ENCODE measurements at regions of chr18 and their contacts with region 1.

Region 1: GRCh38 chr18:3297025-3297984 is 35.4 kb downstream of the MYL12B start:
- DNase-seq: peak; percentile 97
- H3K4me3 Mint-ChIP-seq: peak overlapping the region; percentile 95
- H3K27ac Mint-ChIP-seq: peak overlapping the region; percentile 47
- H3K4me1 Mint-ChIP-seq: peaks cover 5% of the 10 kb centered on the region
- H3K27me3 Mint-ChIP-seq: no peaks in the 10 kb centered on the region
- CTCF ChIP-seq: peak; percentile 36

Region 2: DNA sequence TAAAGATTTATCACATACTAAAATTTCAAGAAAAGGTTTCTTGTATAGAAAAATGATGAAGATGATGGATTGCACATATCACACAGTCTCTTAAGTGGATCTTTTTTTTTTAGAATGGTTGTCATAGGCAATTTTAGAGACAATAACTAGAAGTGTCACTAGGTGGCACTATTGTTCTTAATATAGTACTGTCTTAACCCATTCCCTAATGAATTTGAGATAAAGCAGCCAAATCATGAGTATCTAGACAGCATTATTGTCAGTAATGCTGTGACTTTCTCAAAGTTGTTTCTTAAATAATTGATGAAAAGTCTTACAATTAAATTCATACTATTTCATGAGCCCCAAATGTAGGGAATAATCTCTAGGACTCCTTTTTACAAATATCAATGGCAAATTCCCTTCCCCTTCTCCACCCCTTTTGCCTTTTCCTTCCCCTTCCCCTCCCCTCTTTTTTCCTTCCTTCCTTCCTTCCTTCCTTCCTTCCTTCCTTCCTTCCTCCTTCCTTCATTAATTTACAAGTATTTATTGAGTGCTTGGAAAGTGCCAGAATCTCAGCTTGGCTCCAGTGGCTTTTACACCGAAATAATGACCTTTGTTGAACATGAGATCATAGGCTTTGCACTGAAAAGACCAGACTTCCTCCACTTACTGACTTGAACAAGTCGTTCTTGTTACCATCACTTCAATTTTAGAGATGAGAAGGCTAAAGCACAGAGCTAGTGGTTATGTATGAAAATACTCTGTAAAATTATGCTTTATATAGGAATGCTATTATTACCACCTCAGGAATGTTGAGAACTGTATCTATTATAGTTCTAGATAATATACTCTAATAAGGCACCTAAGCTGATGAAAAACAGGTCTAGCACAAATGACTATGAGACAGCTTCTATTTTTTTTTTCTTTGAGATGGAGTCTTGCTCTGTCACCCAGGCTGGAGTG is 15.6 kb before region 1 on chr18:
- CTCF ChIA-PET with region 1: interaction called, 16 read pairs
- POLR2A ChIA-PET with region 1: interaction called, 15 read pairs
- intact Hi-C with region 1: no loop called
- DNase-seq: peak; percentile 80
- H3K4me3 Mint-ChIP-seq: no peak overlapping the region
- H3K27ac Mint-ChIP-seq: no peak overlapping the region
- H3K4me1 Mint-ChIP-seq: peaks cover 6% of the 10 kb centered on the region
- H3K27me3 Mint-ChIP-seq: no peaks in the 10 kb centered on the region
- CTCF ChIP-seq: peak; percentile 52

Region 3: DNA sequence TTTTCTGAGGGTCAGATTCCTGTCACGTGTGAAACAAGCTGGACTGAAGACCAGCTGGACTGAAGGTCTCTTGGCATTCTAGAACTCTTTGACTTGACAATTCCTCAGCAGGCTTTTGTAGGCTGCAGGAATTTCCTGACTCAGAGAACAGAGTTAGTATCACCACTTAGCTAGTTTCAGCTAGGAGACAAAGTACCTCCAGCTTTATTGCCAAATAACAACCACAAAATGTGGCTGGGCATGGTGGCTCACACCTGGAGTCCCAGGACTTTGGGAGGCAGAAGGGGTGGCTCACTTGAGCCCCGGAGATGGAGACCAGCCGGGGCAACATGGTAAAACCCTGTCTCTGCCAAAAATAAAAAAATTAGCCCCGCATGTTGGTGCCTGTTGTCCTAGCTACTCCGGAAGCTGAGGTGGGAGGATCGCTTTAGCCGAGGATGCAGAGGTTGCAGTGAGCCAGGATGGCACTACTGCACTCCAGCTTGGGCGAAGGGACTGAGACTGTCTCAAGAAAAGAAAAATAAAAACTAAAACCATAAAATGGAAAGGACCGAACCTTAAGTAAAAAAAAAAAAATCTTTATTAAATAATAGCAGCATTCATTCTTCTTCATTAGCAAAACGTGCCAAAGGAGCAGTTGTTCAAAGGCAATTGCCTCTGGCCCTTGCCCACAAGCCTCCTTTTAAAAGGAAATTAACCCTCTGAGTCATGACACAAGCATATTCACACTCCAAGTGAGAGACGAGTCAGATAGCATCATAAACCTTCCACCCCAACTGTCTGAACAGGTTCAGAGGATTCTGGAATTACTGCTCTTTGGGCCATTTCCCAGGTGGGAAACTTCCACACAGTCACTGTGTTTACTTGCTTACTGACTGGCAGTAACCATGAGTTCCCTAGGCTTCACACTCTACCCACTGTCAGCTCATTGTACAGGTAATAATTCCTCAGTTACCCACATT is 53.5 kb after region 1 on chr18:
- CTCF ChIA-PET with region 1: interaction called, 3 read pairs
- POLR2A ChIA-PET with region 1: interaction called, 23 read pairs
- intact Hi-C with region 1: loop called (anchors 5 kb)
- DNase-seq: peak; percentile 73
- H3K4me3 Mint-ChIP-seq: no peak overlapping the region
- H3K27ac Mint-ChIP-seq: no peak overlapping the region
- H3K4me1 Mint-ChIP-seq: peaks cover 14% of the 10 kb centered on the region
- H3K27me3 Mint-ChIP-seq: no peaks in the 10 kb centered on the region
- CTCF ChIP-seq: no peak

Region 4: DNA sequence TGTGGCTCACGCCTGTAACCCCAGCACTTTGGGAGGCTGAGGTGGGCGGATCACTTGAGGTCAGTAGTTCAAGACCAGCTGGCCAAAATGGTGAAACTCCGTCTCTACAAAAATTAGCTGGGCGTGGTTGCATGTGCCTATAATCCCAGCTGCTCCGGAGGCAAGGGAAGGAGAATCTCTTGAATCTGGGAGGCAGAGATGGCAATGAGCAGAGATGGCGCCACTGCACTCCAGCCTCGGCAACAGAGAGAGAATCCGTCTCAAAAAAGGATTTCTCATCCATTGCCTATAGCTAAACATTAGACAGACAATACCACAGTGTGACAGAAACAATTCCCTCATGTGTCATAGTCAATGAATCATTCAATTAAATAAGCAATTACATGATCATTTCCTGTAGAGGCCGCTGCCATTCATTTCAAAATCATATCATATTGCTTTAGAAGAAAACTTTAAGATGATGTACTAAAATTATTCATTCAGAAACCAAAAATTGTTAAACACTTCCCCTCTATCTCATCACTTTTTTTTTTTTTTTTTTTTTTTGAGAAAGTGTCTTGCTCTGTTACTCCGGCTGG is 83.2 kb after region 1 on chr18:
- CTCF ChIA-PET with region 1: no interaction called
- POLR2A ChIA-PET with region 1: no interaction called
- intact Hi-C with region 1: no loop called
- DNase-seq: peak; percentile 74
- H3K4me3 Mint-ChIP-seq: no peak overlapping the region
- H3K27ac Mint-ChIP-seq: no peak overlapping the region
- H3K4me1 Mint-ChIP-seq: no peaks in the 10 kb centered on the region
- H3K27me3 Mint-ChIP-seq: no peaks in the 10 kb centered on the region
- CTCF ChIP-seq: peak; percentile 19

Region 5: DNA sequence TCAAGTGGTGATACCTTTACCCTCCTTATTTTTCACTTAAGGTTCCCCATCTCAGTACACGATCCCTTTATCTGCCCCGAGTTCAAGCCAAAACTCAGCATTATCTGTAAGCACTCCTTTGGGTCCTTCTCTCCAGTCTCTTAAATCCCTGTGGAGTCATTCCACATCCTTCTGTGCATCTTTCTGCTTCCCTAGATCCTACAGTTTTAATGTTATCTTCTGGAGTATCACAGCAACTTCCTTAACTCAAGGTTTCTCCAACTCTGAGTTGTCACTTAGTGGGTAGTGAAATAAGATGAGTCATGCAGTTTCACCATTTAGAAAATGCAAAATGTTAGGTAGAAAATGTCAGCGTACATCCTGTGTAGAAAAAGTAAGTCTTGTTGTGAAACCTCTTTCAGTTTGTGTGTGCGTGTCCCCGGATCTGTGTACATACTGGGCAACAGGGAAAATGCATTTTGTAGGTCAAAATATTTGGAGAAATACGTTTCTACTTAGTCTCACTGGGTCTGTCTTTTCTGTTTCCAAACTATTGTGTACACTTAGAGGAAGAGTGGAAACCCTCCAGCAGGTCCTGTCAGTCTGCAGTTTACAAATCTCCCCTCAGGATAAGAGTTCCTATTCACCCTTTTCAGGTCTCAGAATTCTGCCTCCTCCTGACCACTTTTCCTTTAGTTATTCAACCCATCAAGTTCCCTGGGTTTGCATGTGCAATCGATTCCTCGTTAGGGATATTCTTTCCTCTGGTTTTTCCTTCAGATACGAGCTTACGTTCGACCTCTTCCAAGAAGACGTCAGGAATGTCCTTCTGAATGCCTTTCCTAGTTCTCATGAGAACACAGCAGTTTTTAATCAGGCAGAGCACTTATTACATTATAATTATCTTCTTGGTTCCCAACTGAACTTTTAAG is 307.4 kb after region 1 on chr18:
- CTCF ChIA-PET with region 1: interaction called, 4 read pairs
- POLR2A ChIA-PET with region 1: interaction called, 21 read pairs
- intact Hi-C with region 1: loop called (anchors 1 kb)
- DNase-seq: peak; percentile 91
- H3K4me3 Mint-ChIP-seq: no peak overlapping the region
- H3K27ac Mint-ChIP-seq: no peak overlapping the region
- H3K4me1 Mint-ChIP-seq: no peaks in the 10 kb centered on the region
- H3K27me3 Mint-ChIP-seq: no peaks in the 10 kb centered on the region
- CTCF ChIP-seq: no peak